SK-N-SH (cell line): ENCODE measurements at regions of chr2 and their contacts with region 1.

Region 1: DNA sequence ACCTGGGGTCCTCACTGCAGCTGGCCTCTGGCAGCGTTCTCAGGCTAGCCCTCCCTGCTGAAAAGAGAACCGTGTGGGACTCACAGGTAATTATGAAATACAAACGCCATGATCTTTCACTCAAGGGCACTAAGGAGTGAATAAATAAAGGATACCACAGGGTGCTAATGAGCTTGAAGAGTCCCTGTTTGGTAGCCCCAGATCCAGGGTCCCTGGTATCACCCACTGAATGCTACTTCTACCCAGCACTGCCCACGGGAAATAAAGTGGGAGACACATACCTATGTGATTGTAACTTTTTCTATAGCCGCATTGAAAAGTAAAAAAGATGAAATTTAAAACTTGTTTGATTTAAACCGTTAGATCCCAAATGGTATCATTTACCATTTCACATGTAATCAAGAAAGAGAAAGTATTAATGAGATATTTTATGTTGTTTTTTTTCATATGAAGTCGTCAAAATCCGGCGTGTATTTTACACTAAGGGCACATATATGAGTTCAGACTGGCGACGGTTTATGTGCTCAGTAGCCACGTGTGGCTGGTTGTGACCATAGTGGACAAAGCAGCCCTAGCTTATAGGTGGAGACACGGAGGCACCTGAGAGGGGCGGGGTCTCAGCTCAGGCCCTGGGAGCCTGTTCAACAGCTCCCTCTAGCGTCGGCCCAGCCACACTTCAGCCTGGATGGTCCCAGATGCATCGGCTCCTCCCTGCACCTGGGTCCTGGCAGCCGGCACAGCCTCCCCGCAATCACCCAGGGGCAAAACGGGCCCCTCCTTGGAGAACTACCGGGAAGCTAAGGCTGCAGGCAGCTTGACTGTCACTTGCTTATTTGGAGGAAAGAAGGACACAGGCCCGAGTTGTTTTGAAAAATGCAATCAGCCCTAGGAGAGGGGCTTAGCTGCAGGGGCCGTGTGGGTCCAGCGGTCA is 39.2 kb downstream of the ODC1 start:
- DNase-seq: peak; percentile 97
- H3K4me3 ChIP-seq: peak overlapping the region in 1 of 2 experiments; percentile 26; a peak in 1 of 4 replicates
- H3K27ac ChIP-seq: peak overlapping the region in 1 of 2 experiments; percentile 62; a peak in 2 of 4 replicates
- H3K4me1 ChIP-seq: peaks cover 34 to 55% of the 10 kb centered on the region in 2 experiments
- H3K27me3 ChIP-seq: no peaks in the 10 kb centered on the region
- CTCF ChIP-seq: peak; percentile 99
- EP300 ChIP-seq: no peak
- RAD21 ChIP-seq: peak; percentile 99

Region 2: DNA sequence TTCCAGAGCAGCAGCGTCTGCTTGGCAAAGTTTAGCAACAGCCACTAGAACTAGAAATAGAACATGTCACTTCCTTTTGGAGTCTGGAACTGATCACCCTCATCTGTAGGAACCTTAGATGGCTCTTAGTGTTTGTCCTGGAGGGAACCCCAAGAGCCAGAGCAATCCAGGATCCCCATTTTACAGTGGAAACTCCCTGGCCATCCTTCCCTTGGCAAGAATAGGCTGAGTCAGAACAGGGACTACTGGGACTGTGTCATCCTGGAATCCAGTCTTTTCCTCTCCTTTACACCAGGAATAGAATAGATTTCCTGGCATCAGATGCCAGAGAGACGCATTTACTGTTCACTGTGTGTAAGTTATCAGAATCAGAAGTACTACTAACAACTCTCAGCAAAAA is 490.6 kb before region 1 on chr2:
- CTCF ChIA-PET with region 1: no interaction called
- POLR2A ChIA-PET with region 1: no interaction called
- DNase-seq: no peak
- H3K4me3 ChIP-seq: no peak overlapping the region
- H3K27ac ChIP-seq: peak overlapping the region in 1 of 2 experiments; percentile 9; a peak in 2 of 4 replicates
- H3K4me1 ChIP-seq: peaks cover 0 to 14% of the 10 kb centered on the region in 2 experiments; a peak in 2 of 4 replicates
- H3K27me3 ChIP-seq: no peaks in the 10 kb centered on the region
- CTCF ChIP-seq: no peak
- EP300 ChIP-seq: no peak
- RAD21 ChIP-seq: no peak

Region 3: GRCh38 chr2:10122386-10123280 is 286.3 kb before region 1 on chr2 and contains the start of gene RRM2:
- CTCF ChIA-PET with region 1: interaction called, 403 read pairs
- POLR2A ChIA-PET with region 1: interaction called, 3 read pairs
- DNase-seq: peak; percentile 99
- H3K4me3 ChIP-seq: peak within 1 kb of the TSS; percentile 63 to 69
- H3K27ac ChIP-seq: peak within 1 kb of the TSS; percentile 84 to 87
- H3K4me1 ChIP-seq: peaks cover 12 to 30% of the 10 kb centered on the region in 2 experiments; a peak in 3 of 4 replicates
- H3K27me3 ChIP-seq: no peaks in the 10 kb centered on the region
- CTCF ChIP-seq: no peak
- EP300 ChIP-seq: no peak
- RAD21 ChIP-seq: no peak
- polyA plus RNA-seq, gene RRM2: 23.6 and 38.9 TPM in 2 replicates

Region 4: DNA sequence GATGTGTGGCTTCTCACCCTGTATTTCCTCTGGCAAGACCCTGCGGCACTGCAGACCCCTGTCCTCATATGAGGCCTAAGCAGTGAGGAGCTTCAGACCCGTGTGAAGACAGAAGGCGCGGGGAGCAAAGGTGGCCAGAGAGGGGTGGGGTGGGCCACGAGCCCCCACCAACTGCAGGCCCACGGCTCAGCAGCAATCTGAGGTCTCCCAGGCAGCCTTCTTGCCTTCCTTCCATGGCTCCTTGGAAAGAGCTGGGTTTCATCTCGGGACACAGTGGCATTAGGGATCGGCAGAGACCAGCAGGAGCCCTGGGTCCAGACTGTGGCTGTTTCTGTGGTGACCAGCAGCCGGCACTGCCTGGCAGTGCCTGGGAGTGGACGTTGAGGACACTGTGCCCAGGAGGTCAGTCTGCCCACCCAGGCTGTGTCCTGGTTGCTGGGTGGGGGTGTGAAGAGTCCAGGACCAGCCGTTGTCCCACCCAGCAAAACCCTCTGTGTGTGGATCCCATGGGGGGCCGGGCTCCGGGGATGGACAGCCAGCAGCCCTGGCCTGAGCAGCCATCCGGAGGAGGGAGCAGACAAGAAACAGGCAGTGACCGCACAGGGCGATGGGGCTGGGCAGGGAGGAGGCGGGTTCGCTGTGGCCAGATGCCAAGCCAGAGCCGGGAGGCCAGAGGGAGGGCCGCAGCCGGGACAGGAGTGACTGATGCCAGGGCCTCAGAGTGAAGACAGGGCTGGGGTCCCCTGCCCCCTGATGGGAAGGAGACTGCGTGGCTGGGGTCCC is 212.6 kb before region 1 on chr2:
- CTCF ChIA-PET with region 1: interaction called, 19 read pairs
- POLR2A ChIA-PET with region 1: no interaction called
- DNase-seq: peak; percentile 97
- H3K4me3 ChIP-seq: no peak overlapping the region; a peak in 1 of 4 replicates
- H3K27ac ChIP-seq: peak overlapping the region in 1 of 2 experiments; percentile 93; a peak in 2 of 4 replicates
- H3K4me1 ChIP-seq: peaks cover 0 to 25% of the 10 kb centered on the region in 2 experiments; a peak in 1 of 4 replicates
- H3K27me3 ChIP-seq: no peaks in the 10 kb centered on the region
- CTCF ChIP-seq: no peak
- EP300 ChIP-seq: no peak; a peak in 1 of 4 replicates
- RAD21 ChIP-seq: peak; percentile 61

Region 5: DNA sequence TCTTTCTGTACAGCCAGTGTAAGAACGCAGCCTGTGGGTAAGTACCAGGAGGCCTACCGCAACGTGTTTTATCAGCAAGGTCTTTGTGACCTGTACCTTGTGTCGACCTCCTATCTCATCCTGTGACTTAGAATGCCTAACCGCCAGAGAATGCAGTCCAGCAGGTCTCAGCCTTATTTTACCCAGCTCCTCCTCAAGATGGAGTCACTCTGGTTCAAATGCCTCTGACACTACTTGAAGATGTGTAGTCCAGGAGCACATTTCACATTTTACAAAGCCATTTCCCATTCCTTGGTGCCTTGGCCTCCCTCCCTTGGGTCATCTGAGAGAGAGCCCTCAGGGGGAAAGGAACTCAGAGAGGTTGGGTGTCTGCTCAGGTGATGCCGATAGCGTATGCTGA is 112.8 kb before region 1 on chr2:
- CTCF ChIA-PET with region 1: interaction called, 167 read pairs
- POLR2A ChIA-PET with region 1: no interaction called
- DNase-seq: no peak
- H3K4me3 ChIP-seq: no peak overlapping the region
- H3K27ac ChIP-seq: peak overlapping the region in 1 of 2 experiments; percentile 11; a peak in 1 of 4 replicates
- H3K4me1 ChIP-seq: peaks cover 10 to 16% of the 10 kb centered on the region in 2 experiments
- H3K27me3 ChIP-seq: no peaks in the 10 kb centered on the region
- CTCF ChIP-seq: no peak
- EP300 ChIP-seq: no peak
- RAD21 ChIP-seq: no peak

Region 6: DNA sequence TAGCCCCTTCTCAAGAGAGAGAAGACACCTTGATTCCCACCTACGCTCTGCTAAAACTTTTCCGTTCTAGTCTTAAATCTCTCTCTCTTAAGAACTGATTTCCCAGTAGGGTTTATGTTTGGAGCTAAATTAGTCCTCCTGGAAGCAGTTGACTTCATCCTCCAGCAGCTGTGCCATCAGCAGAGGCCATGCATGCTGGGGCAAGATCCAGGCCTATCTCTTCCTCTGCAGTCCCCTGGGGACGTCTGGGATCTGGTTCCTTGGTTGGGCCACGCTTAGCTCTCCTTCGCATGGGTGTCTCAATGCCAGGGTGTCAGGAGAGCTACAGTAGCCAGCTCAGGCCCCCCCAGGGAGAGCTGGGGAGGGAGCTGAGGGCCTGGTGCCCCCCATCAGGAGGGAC is 56.6 kb before region 1 on chr2:
- CTCF ChIA-PET with region 1: interaction called, 13 read pairs
- POLR2A ChIA-PET with region 1: interaction called, 3 read pairs
- DNase-seq: no peak
- H3K4me3 ChIP-seq: no peak overlapping the region
- H3K27ac ChIP-seq: peak overlapping the region in 1 of 2 experiments; percentile 47; a peak in 1 of 4 replicates
- H3K4me1 ChIP-seq: peaks cover 0 to 29% of the 10 kb centered on the region in 2 experiments; a peak in 1 of 4 replicates
- H3K27me3 ChIP-seq: no peaks in the 10 kb centered on the region
- CTCF ChIP-seq: no peak
- EP300 ChIP-seq: no peak
- RAD21 ChIP-seq: no peak

Region 7: GRCh38 chr2:10424051-10424450 is 15.1 kb after region 1 on chr2:
- CTCF ChIA-PET with region 1: interaction called, 53 read pairs
- POLR2A ChIA-PET with region 1: no interaction called
- DNase-seq: no peak
- H3K4me3 ChIP-seq: no peak overlapping the region
- H3K27ac ChIP-seq: no peak overlapping the region
- H3K4me1 ChIP-seq: peaks cover 0 to 3% of the 10 kb centered on the region in 2 experiments; a peak in 1 of 4 replicates
- H3K27me3 ChIP-seq: no peaks in the 10 kb centered on the region
- CTCF ChIP-seq: no peak
- EP300 ChIP-seq: no peak
- RAD21 ChIP-seq: no peak

Region 8: GRCh38 chr2:10454505-10454904 is 45.6 kb after region 1 on chr2:
- CTCF ChIA-PET with region 1: no interaction called
- POLR2A ChIA-PET with region 1: no interaction called
- DNase-seq: peak; percentile 48
- H3K4me3 ChIP-seq: no peak overlapping the region
- H3K27ac ChIP-seq: no peak overlapping the region
- H3K4me1 ChIP-seq: peaks cover 10 to 25% of the 10 kb centered on the region in 2 experiments; a peak in 3 of 4 replicates
- H3K27me3 ChIP-seq: no peaks in the 10 kb centered on the region
- CTCF ChIP-seq: no peak
- EP300 ChIP-seq: no peak
- RAD21 ChIP-seq: no peak